IMR-90 (cell line): ENCODE measurements at regions of chr2 and their contacts with region 1.

Region 1: GRCh38 chr2:159758686-159759085 is 39.3 kb downstream of the CD302 start:
- DNase-seq: no peak
- ATAC-seq: no peak
- H3K4me3 ChIP-seq: no peak overlapping the region
- H3K27ac ChIP-seq: no peak overlapping the region
- H3K4me1 ChIP-seq: peaks cover 3% of the 10 kb centered on the region
- H3K27me3 ChIP-seq: no peaks in the 10 kb centered on the region
- CTCF ChIP-seq: no peak
- POLR2A ChIP-seq: no peak
- RAD21 ChIP-seq: no peak

Region 2: DNA sequence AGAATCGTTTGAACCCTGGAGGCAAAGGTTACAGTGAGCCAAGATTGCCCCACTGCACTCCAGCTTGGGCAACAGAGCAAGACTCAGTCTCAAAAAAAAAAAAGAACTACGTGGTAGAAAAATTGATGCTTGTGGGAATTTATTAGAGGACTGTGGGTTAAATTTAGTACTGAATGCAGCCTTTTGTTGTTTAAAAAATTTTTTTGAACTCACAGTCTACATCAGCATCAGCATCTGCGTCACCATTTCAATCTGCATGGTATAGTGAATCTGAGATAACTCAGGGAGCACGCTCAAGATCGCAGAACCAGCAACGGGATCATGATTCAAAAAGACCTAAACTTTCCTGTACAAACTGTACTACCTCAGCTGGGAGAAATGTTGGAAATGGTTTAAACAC is 15.8 kb before region 1 on chr2:
- CTCF ChIA-PET with region 1: interaction called, 3 read pairs
- POLR2A ChIA-PET with region 1: no interaction called
- dilution Hi-C with region 1: no loop called
- in situ Hi-C with region 1: no loop called
- intact Hi-C with region 1: loop called (anchors 2 kb)
- DNase-seq: no peak
- ATAC-seq: no peak
- H3K4me3 ChIP-seq: no peak overlapping the region
- H3K27ac ChIP-seq: no peak overlapping the region
- H3K4me1 ChIP-seq: peaks cover 4% of the 10 kb centered on the region
- H3K27me3 ChIP-seq: no peaks in the 10 kb centered on the region
- CTCF ChIP-seq: no peak
- POLR2A ChIP-seq: no peak
- RAD21 ChIP-seq: no peak